AG04450 (cell line): ENCODE measurements at regions of chr1 and their contacts with region 1.

Region 1: GRCh38 chr1:20521960-20522861 is 14.3 kb upstream of the MUL1 start:
- DNase-seq: peak; percentile 39
- H3K4me3 ChIP-seq: no peak overlapping the region
- H3K27ac ChIP-seq: no peak overlapping the region
- H3K27me3 ChIP-seq: peaks cover 5% of the 10 kb centered on the region
- CTCF ChIP-seq: peak; percentile 98

Region 2: DNA sequence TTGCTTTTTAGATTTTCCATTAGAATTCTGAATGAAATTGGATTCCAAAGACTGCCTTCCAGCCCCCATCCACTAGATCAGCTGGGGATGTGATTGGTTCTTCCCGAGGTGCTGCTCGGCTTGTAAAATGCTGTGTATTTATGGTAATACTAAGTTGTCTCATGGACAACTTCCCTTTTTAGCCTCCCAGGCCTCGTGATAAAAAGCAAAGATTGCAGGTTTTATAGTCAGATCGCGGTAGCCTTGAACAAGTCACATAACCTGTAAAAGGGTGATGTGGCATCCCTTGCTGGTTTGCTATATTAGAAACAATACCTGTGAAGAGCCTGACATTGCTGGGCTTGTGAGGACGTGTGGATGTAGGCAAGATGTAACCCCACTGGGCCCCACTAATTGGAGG is 24.7 kb before region 1 on chr1:
- CTCF ChIA-PET with region 1: no interaction called
- POLR2A ChIA-PET with region 1: no interaction called
- DNase-seq: no peak
- H3K4me3 ChIP-seq: no peak overlapping the region
- H3K27ac ChIP-seq: no peak overlapping the region
- H3K27me3 ChIP-seq: no peaks in the 10 kb centered on the region
- CTCF ChIP-seq: no peak

Region 3: DNA sequence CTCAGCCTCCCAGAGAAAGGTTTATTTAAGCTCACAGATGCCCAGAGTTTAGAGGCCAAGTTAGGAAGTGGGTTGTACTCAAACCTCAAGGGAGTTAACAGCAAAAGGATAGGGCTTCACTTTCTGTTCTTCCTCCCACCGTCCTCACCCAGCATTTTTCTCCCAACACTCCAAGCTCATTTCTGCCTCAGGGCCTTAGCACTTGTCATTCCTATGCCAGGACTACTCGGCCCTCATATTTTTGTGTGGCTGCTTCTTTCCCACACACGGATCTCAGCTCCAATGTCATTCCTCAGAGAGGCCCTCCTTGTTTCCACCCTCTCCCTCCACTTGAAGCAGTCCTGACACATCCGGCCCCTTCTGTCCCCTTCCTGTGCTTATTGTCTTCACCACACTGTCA is 43.0 kb after region 1 on chr1:
- CTCF ChIA-PET with region 1: no interaction called
- POLR2A ChIA-PET with region 1: no interaction called
- DNase-seq: no peak
- H3K4me3 ChIP-seq: no peak overlapping the region
- H3K27ac ChIP-seq: no peak overlapping the region
- H3K27me3 ChIP-seq: peaks cover 26% of the 10 kb centered on the region
- CTCF ChIP-seq: no peak

Region 4: GRCh38 chr1:20640183-20640597 is 118.0 kb after region 1 on chr1:
- CTCF ChIA-PET with region 1: interaction called, 116 read pairs
- POLR2A ChIA-PET with region 1: interaction called, 3 read pairs
- DNase-seq: no peak
- H3K4me3 ChIP-seq: no peak overlapping the region
- H3K27ac ChIP-seq: no peak overlapping the region
- H3K27me3 ChIP-seq: no peaks in the 10 kb centered on the region
- CTCF ChIP-seq: peak; percentile 84

Region 5: GRCh38 chr1:20840731-20841130 is 318.5 kb after region 1 on chr1:
- CTCF ChIA-PET with region 1: no interaction called
- POLR2A ChIA-PET with region 1: no interaction called
- DNase-seq: no peak
- H3K4me3 ChIP-seq: no peak overlapping the region
- H3K27ac ChIP-seq: no peak overlapping the region
- H3K27me3 ChIP-seq: no peaks in the 10 kb centered on the region
- CTCF ChIP-seq: no peak